Breast epithelium (tissue), 4 donors: ENCODE measurements at regions of chr14 and their contacts with region 1.

Region 1: GRCh38 chr14:72129266-72129665 is 197.0 kb downstream of the RGS6 start:
- DNase-seq: peak; percentile 32 to 60
- H3K4me3 ChIP-seq: no peak overlapping the region
- H3K27ac ChIP-seq: peak overlapping the region in 1 of 2 donors; percentile 0
- H3K4me1 ChIP-seq: no peaks in the 10 kb centered on the region
- H3K27me3 ChIP-seq: no peaks in the 10 kb centered on the region
- CTCF ChIP-seq: no peak
- POLR2A ChIP-seq: no peak

Region 2: DNA sequence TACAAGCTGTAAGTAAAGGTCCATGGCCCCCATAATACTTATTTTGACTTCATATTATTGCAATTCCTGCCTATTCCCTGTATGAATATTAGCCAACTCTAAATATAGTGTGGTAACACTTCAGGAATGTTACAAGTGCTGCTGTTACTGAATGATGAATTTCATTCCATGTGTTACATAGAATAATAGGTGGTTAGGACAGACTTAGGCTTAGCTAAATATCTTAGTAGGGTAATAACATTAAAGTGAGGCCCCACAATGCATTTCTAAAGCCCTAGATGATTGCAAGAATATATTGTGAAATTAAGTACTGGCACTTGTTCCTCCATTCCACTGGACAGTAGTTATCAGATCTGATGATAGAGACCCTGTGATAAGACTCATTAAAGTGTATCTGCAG is 1039.3 kb before region 1 on chr14:
- intact Hi-C with region 1: loop called (anchors 10 kb)
- DNase-seq: no peak
- H3K4me3 ChIP-seq: no peak overlapping the region
- H3K27ac ChIP-seq: no peak overlapping the region
- H3K4me1 ChIP-seq: no peaks in the 10 kb centered on the region
- H3K27me3 ChIP-seq: no peaks in the 10 kb centered on the region
- CTCF ChIP-seq: no peak
- POLR2A ChIP-seq: no peak

Region 3: GRCh38 chr14:72154723-72155633 is 25.7 kb after region 1 on chr14:
- intact Hi-C with region 1: no loop called
- DNase-seq: no peak
- H3K4me3 ChIP-seq: no peak overlapping the region
- H3K27ac ChIP-seq: peak overlapping the region in 1 of 2 donors; percentile 38
- H3K4me1 ChIP-seq: no peaks in the 10 kb centered on the region
- H3K27me3 ChIP-seq: no peaks in the 10 kb centered on the region
- CTCF ChIP-seq: no peak
- POLR2A ChIP-seq: no peak

Region 4: DNA sequence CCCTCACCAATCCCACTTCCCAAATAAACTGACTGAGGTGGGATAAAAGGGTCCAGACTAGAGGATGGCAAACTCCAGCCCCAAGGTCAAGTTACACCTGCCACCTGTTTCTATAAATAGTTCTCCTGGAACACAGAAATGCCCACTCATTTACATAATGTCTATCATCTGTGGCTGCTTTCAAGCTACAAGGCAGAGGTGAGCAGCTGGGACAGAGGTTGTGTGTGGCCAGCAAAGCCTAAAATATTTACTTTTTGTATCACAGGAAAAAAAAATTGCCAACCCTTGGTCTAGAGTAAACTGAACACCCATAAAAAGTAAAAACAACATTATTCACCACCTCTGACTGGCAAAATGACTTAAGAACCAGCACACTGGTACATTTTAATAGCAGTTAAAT is 72.4 kb after region 1 on chr14:
- intact Hi-C with region 1: no loop called
- DNase-seq: no peak
- H3K4me3 ChIP-seq: no peak overlapping the region
- H3K27ac ChIP-seq: no peak overlapping the region
- H3K4me1 ChIP-seq: no peaks in the 10 kb centered on the region
- H3K27me3 ChIP-seq: no peaks in the 10 kb centered on the region
- CTCF ChIP-seq: no peak
- POLR2A ChIP-seq: no peak